ENCODE measurements at regions of chr11 and their contacts with region 1.

Region 1: GRCh38 chr11:2951231-2952110 is 22.3 kb upstream of the PHLDA2 start:
- DNase-seq: no peak
- H3K4me3 Mint-ChIP-seq: no peak overlapping the region
- H3K27ac Mint-ChIP-seq: peak overlapping the region; percentile 72
- H3K4me1 Mint-ChIP-seq: peaks cover 70% of the 10 kb centered on the region
- H3K27me3 Mint-ChIP-seq: no peaks in the 10 kb centered on the region

Region 2: GRCh38 chr11:2867722-2868505 is 83.6 kb before region 1 on chr11:
- CTCF ChIA-PET with region 1: no interaction called
- POLR2A ChIA-PET with region 1: no interaction called
- DNase-seq: no peak
- H3K4me3 Mint-ChIP-seq: no peak overlapping the region
- H3K27ac Mint-ChIP-seq: no peak overlapping the region
- H3K4me1 Mint-ChIP-seq: peaks cover 2% of the 10 kb centered on the region
- H3K27me3 Mint-ChIP-seq: peaks cover 56% of the 10 kb centered on the region

Region 3: DNA sequence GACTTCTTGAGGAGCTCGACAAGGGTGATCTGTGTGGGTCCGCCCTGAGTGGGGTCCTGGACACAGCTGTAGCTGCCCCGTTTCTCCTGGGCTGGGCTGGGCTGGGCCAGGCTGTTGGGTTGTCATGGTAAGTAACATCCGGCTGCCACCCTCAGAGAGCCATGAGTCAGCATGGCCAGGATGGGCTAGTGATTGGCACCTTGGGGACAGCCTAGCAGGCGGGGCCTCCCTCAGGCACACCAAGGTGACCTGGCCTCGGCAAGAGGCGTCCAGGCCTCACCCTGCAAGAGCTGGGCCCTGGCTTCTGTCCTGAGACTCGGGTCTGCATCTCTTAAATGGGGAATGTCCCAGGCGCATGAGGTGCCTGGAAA is 10.9 kb before region 1 on chr11:
- CTCF ChIA-PET with region 1: no interaction called
- POLR2A ChIA-PET with region 1: interaction called, 17 read pairs
- DNase-seq: peak; percentile 66
- H3K4me3 Mint-ChIP-seq: no peak overlapping the region
- H3K27ac Mint-ChIP-seq: no peak overlapping the region
- H3K4me1 Mint-ChIP-seq: peaks cover 28% of the 10 kb centered on the region
- H3K27me3 Mint-ChIP-seq: no peaks in the 10 kb centered on the region